GM13976 (cell line): ENCODE measurements at regions of chr17 and their contacts with region 1.

Region 1: GRCh38 chr17:67469208-67469895 is 92.3 kb downstream of the PITPNC1 start:
- DNase-seq: no peak
- CTCF ChIP-seq: no peak

Region 2: DNA sequence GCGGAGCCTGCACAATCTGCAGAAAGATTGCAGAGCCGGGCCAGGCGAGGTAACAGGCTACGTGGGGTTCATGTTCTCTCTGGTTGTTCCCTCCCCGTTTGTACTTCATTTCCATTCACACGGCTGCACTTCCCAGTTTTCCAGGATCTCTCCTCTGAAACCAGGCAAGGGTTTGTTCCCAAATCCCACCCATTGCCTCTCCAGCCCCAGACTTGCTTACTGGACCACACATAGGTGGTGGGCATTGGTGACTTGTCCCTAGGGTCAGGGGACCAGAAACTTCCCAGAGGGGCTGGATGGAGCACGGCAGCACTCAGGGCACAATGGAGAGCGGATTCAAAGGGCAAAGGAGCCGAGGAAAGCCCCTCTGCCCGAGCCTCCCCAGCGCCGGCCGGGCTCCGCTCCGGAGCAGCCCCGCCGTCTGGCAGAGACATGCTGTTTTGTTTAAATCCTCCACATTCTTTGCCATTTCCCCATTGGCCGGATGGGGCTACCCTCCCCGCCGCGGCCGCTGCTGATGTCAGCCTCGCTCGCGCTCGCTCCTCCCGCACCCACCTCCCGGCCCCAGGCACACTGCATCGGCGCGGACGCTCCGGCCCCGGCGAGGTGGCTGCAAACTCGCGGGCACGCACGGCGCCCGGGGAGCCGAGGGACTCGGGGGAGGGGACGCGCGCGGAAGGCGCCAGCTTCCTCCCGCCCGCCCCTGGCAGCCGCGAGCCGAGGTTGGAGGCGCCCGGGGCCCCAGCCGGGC is 92.4 kb before region 1 on chr17 and contains the start of gene PITPNC1:
- in situ Hi-C with region 1: no loop called
- DNase-seq: peak; percentile 90
- CTCF ChIP-seq: no peak

Region 3: GRCh38 chr17:67386965-67387551 is 82.3 kb before region 1 on chr17:
- in situ Hi-C with region 1: loop called (anchors 5 kb)
- DNase-seq: peak; percentile 57
- CTCF ChIP-seq: peak; percentile 52

Region 4: GRCh38 chr17:67520252-67520906 is 51.0 kb after region 1 on chr17:
- in situ Hi-C with region 1: no loop called
- DNase-seq: no peak
- CTCF ChIP-seq: no peak

Region 5: DNA sequence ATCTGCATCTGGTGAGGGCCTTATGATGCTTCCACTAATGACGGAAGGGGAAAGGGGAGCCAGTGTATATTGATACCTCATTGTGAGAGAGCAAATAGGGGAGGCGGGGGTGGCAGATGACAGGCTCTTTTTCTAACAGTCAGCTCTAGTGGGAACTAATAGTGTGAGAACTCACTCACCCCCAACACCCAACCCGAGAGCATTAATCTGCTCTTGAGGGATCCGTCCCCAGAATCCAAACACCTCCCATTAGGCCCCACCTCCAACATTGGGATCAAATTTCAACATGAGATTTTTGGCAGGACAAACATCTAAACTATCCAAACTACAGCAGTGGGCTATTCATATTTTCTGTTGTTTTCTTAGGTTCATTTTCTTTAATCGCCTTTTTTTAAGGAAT is 410.3 kb after region 1 on chr17:
- in situ Hi-C with region 1: no loop called
- DNase-seq: no peak
- CTCF ChIP-seq: no peak